RWPE1 (cell line): ENCODE measurements at regions of chr20 and their contacts with region 1.

Region 1: GRCh38 chr20:10090588-10091166 is 55.9 kb downstream of the ANKEF1 start:
- DNase-seq: peak; percentile 64
- H3K27ac ChIP-seq: no peak overlapping the region
- CTCF ChIP-seq: peak; percentile 89

Region 2: DNA sequence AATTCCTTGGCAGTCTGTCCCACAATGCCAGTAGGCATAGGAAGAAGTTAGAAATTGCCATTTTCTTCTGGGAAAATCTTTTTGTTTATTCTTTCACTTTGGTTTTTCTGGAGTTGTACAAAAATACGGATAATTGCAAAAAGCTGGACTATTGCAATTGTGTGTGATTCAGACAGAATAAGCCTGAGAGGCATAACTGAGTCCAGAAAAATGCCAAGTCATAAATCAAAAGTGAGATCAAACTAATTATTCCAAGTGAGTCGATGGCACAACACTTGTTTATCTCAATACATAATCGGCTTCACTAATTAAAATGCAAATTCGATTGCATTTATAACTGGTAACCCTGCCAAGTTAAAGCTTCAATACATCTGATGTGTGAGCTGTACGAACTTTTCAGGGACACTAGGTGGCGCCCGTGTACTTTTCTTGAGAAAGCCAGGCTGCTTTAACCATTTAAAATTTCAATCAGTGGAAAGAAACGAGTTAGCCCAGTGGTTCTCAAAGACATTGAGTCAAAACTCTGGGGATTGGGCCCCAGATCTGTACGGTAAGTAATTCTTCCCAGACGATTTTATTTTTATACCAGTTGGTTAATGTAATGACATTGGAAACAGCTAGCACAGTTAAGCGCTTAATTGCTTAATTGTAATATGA is 473.7 kb before region 1 on chr20:
- CTCF ChIA-PET with region 1: interaction called, 12 read pairs
- POLR2A ChIA-PET with region 1: no interaction called
- DNase-seq: peak; percentile 46
- H3K27ac ChIP-seq: no peak overlapping the region
- CTCF ChIP-seq: peak; percentile 95

Region 3: DNA sequence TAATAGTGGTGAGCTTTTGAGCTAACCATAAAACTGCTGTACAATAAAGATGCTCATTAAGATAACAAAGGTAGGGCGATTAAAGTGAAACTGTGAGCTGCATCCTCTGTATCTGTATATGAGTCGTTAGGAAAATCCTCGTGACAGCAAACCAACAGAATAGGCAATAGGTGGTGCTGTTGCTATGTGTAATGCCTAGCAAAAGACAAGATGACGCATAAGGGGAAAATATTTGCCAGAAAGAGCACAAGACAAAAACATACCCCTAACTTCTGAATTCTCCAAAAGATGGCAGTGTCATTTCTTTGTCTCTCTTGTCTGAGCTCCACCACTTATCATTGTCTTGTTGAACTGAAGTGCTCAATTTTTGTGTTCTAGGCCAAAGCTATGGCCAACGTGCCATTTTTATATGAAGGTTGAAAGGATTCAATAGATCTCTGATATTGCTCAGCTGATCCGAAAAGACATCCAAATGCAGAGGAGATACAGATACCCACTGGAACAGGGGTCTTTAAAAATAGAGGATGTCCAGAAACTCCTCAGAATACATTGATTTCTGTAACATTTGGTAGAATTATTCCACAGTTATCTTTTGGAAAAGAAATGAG is 112.2 kb before region 1 on chr20:
- CTCF ChIA-PET with region 1: interaction called, 38 read pairs
- POLR2A ChIA-PET with region 1: no interaction called
- DNase-seq: peak; percentile 69
- H3K27ac ChIP-seq: no peak overlapping the region
- CTCF ChIP-seq: peak; percentile 90

Region 4: GRCh38 chr20:10034717-10035571 is 55.7 kb before region 1 on chr20 and contains the start of gene ANKEF1:
- CTCF ChIA-PET with region 1: interaction called, 10 read pairs
- POLR2A ChIA-PET with region 1: no interaction called
- DNase-seq: peak; percentile 84
- H3K27ac ChIP-seq: peak within 1 kb of the TSS; percentile 83
- CTCF ChIP-seq: no peak

Region 5: DNA sequence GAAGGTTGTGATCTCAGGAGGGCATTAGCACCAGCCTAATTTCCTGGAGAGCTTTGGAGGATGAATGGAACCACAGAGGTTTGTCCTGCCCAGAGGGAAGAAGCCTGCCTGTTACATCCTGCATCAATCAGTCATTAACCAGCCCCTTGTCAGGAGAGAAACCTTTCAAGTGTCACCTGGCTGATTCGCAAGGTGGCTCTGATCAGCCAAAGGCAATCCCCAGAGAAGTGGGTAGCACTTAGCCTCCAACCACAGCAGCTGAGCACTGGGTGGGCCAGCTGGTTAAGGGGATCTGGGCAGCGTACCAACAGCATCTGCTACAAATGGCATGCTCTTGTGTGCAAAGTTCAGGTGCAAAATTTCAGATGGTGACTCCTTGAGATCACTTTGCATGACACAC is 29.0 kb before region 1 on chr20:
- CTCF ChIA-PET with region 1: no interaction called
- POLR2A ChIA-PET with region 1: no interaction called
- DNase-seq: no peak
- H3K27ac ChIP-seq: no peak overlapping the region
- CTCF ChIP-seq: no peak

Region 6: DNA sequence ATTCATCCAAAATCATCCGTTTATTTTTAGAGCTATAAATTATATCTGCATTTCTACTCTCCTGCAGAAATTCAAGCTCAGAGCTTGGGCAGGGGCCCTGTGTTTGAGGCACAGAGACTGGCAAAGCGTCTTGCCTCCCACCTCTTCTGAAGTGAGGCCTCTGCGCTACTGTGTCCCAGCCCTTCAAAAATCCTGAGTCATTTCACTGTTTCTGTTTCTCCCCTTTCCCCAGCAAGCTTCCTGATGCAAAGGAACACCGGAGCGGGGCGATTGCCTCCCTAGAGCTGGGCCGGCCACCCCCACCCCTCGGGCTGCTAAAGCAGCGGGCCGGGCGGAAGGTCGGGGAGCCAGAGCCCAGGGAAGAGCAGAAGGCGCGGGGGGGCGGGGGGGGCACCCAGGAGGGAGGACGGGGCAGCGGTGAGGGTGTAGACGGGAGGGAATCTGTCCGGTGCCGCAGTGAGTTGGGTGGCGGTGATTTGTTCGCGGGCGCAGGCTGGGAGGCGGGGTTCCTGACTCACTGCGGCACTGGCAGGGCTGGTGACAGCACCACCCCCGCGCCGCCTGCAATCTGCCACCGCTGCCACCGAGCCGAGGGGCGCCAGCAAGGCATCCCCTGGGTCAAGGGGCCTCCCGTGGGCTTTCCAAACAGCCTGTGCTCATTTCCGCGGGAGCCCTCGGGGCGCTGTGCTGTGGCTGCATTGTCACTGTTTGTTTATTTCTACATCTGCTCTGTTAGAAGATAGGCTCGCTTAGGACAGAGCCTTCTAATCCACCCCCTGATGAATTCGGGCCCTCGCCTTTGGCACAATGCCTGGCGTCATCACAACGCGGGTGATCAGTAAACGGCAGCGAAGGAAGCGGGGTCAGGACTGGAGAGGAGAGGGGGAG is 81.4 kb after region 1 on chr20:
- CTCF ChIA-PET with region 1: no interaction called
- POLR2A ChIA-PET with region 1: no interaction called
- DNase-seq: peak; percentile 41
- H3K27ac ChIP-seq: no peak overlapping the region
- CTCF ChIP-seq: no peak